Activated T-helper 1 cell treated with anti-CD3 and anti-CD28 coated beads, Interleukin-12 subunit alpha, Interleukin-12 subunit beta, Interleukin-2, Interleukin-4 antibody, amounts not matched to agents 30 ng/mL and 10 ng/mL and 1 ng/mL, durations not matched to agents 14 hours and 24 hours and 36 hours (primary cell): ENCODE measurements at regions of chr7 and their contacts with region 1.

Region 1: GRCh38 chr7:974820-975681 is at the start of gene COX19:
- DNase-seq: peak; percentile 85
- H3K4me3 Mint-ChIP-seq: peak within 1 kb of the TSS; percentile 97
- H3K27ac Mint-ChIP-seq: peak within 1 kb of the TSS; percentile 94
- H3K4me1 Mint-ChIP-seq: peaks cover 5% of the 10 kb centered on the region
- H3K27me3 Mint-ChIP-seq: no peaks in the 10 kb centered on the region
- total RNA-seq, gene COX19: 14.3 and 18.6 TPM in 2 replicates

Region 2: GRCh38 chr7:891291-891690 is 83.8 kb before region 1 on chr7:
- intact Hi-C with region 1: no loop called
- DNase-seq: no peak
- H3K4me3 Mint-ChIP-seq: no peak overlapping the region
- H3K27ac Mint-ChIP-seq: no peak overlapping the region
- H3K4me1 Mint-ChIP-seq: peaks cover 5% of the 10 kb centered on the region
- H3K27me3 Mint-ChIP-seq: no peaks in the 10 kb centered on the region

Region 3: GRCh38 chr7:901381-902154 is 73.5 kb before region 1 on chr7:
- intact Hi-C with region 1: loop called (anchors 1 kb)
- DNase-seq: peak; percentile 37
- H3K4me3 Mint-ChIP-seq: no peak overlapping the region
- H3K27ac Mint-ChIP-seq: no peak overlapping the region
- H3K4me1 Mint-ChIP-seq: no peaks in the 10 kb centered on the region
- H3K27me3 Mint-ChIP-seq: peaks cover 5% of the 10 kb centered on the region

Region 4: GRCh38 chr7:923108-924041 is 51.7 kb before region 1 on chr7:
- intact Hi-C with region 1: loop called (anchors 1 kb)
- DNase-seq: peak; percentile 89
- H3K4me3 Mint-ChIP-seq: peak overlapping the region; percentile 81
- H3K27ac Mint-ChIP-seq: peak overlapping the region; percentile 94
- H3K4me1 Mint-ChIP-seq: peaks cover 20% of the 10 kb centered on the region
- H3K27me3 Mint-ChIP-seq: peaks cover 4% of the 10 kb centered on the region

Region 5: DNA sequence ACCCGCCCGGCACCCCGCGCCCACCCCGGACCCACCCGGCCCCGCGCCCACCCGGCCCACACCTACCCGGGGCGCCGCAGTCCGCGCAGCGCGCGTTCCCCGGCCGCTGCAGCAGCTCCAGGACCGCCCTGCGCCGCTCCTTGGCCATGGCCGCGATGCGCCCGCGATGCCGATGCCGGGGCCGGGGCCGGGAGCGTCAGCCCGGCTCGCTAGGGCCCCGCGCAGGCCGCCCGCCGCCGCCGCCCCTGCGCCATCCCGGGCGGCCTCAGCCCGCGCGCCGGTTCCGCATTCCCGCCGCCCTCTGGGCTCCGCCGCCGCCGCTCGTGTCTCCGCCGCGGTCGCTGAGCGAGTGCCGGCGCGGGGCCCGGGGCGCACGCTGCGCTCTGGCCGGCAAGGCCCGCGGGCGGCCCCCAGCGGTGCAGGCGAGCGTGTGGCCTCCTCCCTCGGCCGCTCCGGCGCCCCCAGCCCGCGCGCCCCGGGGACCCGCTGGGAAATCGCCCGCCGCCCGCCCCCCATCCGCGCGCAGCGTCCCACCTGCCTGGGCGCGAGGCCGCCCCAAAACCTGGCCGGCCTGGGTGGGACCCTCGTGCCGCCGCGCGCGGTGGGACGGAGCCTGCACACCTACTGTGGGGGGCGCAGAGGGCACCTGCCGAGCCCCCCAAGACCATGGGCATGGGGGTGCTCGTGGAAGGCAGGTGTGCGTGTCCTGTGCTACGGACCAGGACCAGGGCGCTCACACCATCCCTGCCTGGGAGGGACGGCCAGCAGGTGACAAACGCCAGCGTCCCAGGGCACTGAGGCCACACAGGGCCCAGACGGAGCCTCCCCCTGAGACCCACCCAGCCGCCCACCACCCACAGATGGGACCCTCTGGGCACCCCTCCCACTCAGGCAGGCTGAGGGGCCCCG is 20.5 kb before region 1 on chr7 and contains the start of gene ADAP1:
- intact Hi-C with region 1: loop called (anchors 2 kb)
- DNase-seq: peak; percentile 41
- H3K4me3 Mint-ChIP-seq: peak within 1 kb of the TSS; percentile 84
- H3K27ac Mint-ChIP-seq: peak within 1 kb of the TSS; percentile 7
- H3K4me1 Mint-ChIP-seq: no peaks in the 10 kb centered on the region
- H3K27me3 Mint-ChIP-seq: peaks cover 7% of the 10 kb centered on the region
- total RNA-seq, gene ADAP1: 80.9 and 87.7 TPM in 2 replicates

Region 6: DNA sequence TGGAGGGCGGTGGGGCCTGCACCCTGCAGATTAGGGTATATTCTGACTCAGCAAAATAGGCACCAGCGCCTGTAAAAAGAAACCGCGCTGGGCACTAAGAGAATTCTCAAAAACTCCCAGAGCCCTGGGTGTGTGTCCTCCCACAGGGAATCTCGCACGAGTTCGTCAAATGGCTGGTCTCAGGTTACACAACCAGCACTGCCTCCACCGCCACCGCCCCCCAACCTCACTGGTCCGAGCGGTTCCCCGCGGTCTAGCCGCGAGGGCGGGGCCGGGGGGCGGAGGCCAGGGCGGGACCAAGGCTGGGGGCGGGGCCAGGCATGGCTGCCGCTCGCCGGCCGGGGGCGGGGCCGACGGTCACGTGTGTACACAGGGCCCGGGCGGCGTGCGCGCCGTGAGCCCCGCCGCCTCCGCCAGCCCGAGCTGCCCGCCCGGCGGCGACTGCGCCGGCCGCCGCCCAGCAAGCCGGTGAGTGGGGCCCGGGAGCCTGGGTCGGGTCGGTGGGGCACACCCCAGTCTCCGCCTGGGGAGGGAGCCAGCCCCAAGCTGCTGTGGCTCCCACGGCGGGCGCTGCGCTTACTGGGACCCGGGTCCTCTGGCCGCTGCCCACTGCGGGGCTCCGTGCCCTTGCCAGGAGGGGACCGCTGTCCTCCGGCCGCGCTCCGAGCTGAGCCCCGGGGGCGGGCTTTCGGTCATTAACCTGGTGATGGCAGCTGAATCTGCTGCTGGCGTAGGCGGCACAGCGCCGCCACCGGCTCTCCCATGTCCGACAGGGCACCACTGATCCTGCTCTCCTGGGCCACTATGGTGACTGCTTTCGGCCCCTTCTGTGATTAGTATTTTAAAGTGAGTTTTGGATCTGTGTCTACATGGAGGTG is 69.4 kb after region 1 on chr7 and contains the start of gene GPR146:
- intact Hi-C with region 1: loop called (anchors 1 kb)
- DNase-seq: peak; percentile 85
- H3K4me3 Mint-ChIP-seq: peak within 1 kb of the TSS; percentile 83
- H3K27ac Mint-ChIP-seq: peak within 1 kb of the TSS; percentile 48
- H3K4me1 Mint-ChIP-seq: peaks cover 66% of the 10 kb centered on the region
- H3K27me3 Mint-ChIP-seq: peaks cover 1% of the 10 kb centered on the region
- total RNA-seq, gene GPR146: 2.2 and 2.8 TPM in 2 replicates

Region 7: DNA sequence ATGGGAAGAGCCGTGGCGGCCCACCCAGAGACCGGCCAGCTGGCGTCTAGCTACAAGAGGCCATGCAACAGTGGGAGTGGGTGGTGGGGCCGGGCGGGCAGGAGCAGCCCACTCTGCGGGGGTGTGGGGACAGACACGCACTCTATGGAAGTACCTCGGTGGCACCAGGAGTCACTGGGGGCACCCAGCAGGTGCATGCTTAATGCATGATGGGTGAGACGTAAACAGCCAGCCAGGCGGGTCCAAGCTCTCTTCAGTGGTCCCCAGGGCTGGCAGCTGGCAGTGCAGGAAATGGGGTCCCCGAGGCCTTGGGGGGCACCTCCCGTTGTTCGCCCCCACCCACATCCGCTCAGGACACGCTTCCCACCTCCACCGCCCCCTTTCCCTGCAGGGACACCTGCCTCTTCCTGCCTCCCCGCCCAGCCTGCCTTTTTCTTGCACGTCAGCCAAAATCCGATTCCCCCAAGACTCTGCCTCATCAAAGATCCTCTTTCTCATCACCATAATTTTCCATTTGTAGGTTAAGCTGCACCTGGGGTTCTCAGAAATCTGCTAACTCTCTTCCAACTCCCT is 617.3 kb after region 1 on chr7:
- intact Hi-C with region 1: no loop called
- DNase-seq: no peak
- H3K4me3 Mint-ChIP-seq: peak overlapping the region; percentile 17
- H3K27ac Mint-ChIP-seq: no peak overlapping the region
- H3K4me1 Mint-ChIP-seq: peaks cover 14% of the 10 kb centered on the region
- H3K27me3 Mint-ChIP-seq: peaks cover 20% of the 10 kb centered on the region